Prostate gland (tissue), 2 donors: ENCODE measurements at regions of chr16 and their contacts with region 1.

Region 1: DNA sequence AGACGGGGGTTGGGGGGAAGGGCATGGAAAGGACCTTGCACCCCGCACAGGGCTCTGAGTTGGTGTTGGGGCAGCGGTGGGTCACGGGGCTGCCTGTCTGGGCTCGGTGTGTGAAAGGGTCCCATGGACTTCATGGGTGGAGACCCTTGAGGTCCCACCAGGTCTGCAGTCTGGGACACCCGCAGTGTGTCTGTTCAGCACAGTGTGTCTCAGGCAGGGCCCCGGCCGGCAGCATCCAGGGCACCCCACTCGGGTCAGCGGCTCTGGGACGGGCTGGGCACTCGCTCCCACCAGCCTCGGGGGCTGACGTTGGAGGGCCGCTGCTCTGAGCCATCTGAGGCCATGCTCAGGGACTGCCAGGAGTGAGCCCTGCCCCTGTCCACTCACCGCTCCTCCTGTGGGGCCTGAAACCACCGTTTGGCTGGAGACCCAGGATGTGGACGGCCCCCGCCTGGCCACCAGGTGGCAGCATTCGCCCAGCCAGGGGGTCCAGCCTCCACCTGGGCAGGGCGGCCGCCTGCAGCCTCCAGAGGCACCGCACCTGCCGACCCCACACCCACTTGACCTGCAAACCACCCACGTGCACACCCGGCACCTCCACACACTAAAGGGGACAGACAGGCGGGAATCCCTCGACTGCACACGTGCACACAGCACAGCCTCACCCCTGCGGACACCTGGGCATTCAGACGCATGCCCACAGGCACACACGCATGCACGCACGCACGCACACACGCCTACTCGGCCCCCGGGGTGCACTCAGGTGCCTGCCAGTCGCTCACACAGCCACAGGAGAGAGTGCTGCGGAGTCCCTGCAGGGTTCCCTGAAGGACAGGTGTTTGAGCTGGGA is 10.1 kb upstream of the ZFPM1 start:
- DNase-seq: peak; percentile 65
- H3K4me3 ChIP-seq: no peak overlapping the region
- H3K27ac ChIP-seq: no peak overlapping the region
- H3K4me1 ChIP-seq: no peaks in the 10 kb centered on the region
- H3K27me3 ChIP-seq: no peaks in the 10 kb centered on the region
- CTCF ChIP-seq: peak; percentile 87 to 99 (median 98)
- POLR2A ChIP-seq: no peak

Region 2: DNA sequence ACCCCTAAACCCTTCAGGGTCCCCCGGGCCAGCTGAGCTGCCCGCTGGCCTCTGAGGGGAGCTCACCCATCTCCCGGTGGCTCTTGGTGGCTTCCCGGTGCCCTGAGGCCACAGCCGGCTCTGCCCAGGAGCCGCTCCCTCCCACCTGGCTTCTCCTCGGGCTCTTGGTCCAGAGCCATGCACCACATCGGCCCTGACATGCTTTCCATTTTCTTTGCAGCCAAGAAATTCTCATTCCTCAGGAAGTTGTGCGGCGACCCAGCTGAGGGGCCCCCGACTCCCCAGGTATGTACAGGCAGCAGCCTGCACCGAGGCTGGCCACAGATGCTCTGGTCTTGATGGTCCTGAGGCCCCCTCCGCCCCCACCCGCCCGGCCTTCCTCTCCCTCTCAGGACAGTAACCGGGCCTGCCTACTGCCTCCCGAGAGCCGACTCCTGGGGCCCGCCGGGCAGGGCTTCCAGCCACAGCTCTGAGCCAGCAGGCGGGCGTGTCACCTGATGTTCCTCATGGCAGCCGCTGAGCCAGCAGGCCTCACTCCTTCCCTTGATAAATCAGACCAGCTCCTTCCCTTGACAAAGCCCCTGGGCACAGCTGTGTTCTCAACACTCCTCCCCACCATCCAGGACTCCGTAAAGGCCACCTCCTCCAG is 18.2 kb before region 1 on chr16:
- intact Hi-C with region 1: no loop called
- DNase-seq: peak; percentile 69
- H3K4me3 ChIP-seq: no peak overlapping the region
- H3K27ac ChIP-seq: peak overlapping the region; percentile 38 to 74
- H3K4me1 ChIP-seq: peaks cover 3% of the 10 kb centered on the region
- H3K27me3 ChIP-seq: no peaks in the 10 kb centered on the region
- CTCF ChIP-seq: peak in 1 of 4 experiments; percentile 4
- POLR2A ChIP-seq: no peak

Region 3: GRCh38 chr16:88527186-88527936 is 84.4 kb after region 1 on chr16:
- intact Hi-C with region 1: loop called (anchors 2 kb)
- DNase-seq: peak; percentile 44
- H3K4me3 ChIP-seq: no peak overlapping the region
- H3K27ac ChIP-seq: no peak overlapping the region
- H3K4me1 ChIP-seq: no peaks in the 10 kb centered on the region
- H3K27me3 ChIP-seq: no peaks in the 10 kb centered on the region
- CTCF ChIP-seq: peak; percentile 61 to 94 (median 87)
- POLR2A ChIP-seq: no peak